ENCODE measurements at regions of chr3 and their contacts with region 1.

Region 1: GRCh38 chr3:57397175-57398026 is 104.9 kb upstream of the ASB14 start:
- DNase-seq: peak; percentile 56 to 72 (median 64)
- H3K4me3 ChIP-seq: no peak overlapping the region
- H3K4me3 Mint-ChIP-seq: peak overlapping the region in 7 of 8 donors; percentile 0 to 71 (median 31)
- H3K27ac ChIP-seq: no peak overlapping the region
- H3K27ac Mint-ChIP-seq: peak overlapping the region in 6 of 7 donors; percentile 33 to 72 (median 46)
- H3K4me1 ChIP-seq: peaks cover 7% of the 10 kb centered on the region
- H3K4me1 Mint-ChIP-seq: peaks cover 6 to 12% (median 9%) of the 10 kb centered on the region in 4 donors
- H3K27me3 ChIP-seq: no peaks in the 10 kb centered on the region
- H3K27me3 Mint-ChIP-seq: peaks cover 5 to 8% of the 10 kb centered on the region in 2 donors

Region 2: GRCh38 chr3:57335283-57335938 is 62.0 kb before region 1 on chr3:
- CTCF ChIA-PET with region 1: no interaction called
- POLR2A ChIA-PET with region 1: no interaction called
- intact Hi-C with region 1: no loop called
- DNase-seq: no peak
- H3K4me3 ChIP-seq: no peak overlapping the region
- H3K4me3 Mint-ChIP-seq: no peak overlapping the region
- H3K27ac ChIP-seq: no peak overlapping the region
- H3K27ac Mint-ChIP-seq: no peak overlapping the region
- H3K4me1 ChIP-seq: no peaks in the 10 kb centered on the region
- H3K4me1 Mint-ChIP-seq: no peaks in the 10 kb centered on the region
- H3K27me3 ChIP-seq: peaks cover 7% of the 10 kb centered on the region
- H3K27me3 Mint-ChIP-seq: peaks cover 8 to 16% of the 10 kb centered on the region in 2 donors

Region 3: DNA sequence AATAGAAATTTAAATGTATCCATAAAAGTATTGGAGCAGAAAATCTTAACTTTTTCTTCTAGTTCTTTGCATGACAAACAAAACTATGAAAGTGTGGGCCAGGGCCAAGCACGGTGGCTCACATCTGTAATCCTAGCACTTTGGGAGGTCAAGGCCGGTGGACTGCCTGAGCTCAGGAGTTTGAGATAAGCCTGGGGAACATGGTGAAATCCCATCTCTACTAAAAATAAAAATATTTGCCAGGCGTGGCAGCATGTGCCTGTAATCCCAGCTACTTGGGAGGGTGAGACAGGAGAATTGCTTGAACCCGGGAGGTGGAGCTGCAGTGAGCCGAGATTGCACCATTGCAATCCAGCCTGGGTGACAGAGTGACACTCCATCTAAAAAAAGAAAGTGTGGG is 11.9 kb before region 1 on chr3:
- CTCF ChIA-PET with region 1: interaction called, 11 read pairs
- POLR2A ChIA-PET with region 1: no interaction called
- intact Hi-C with region 1: no loop called
- DNase-seq: no peak
- H3K4me3 ChIP-seq: no peak overlapping the region
- H3K4me3 Mint-ChIP-seq: no peak overlapping the region
- H3K27ac ChIP-seq: no peak overlapping the region
- H3K27ac Mint-ChIP-seq: no peak overlapping the region
- H3K4me1 ChIP-seq: no peaks in the 10 kb centered on the region
- H3K4me1 Mint-ChIP-seq: no peaks in the 10 kb centered on the region
- H3K27me3 ChIP-seq: no peaks in the 10 kb centered on the region
- H3K27me3 Mint-ChIP-seq: peaks cover 0 to 3% of the 10 kb centered on the region in 2 donors

Region 4: DNA sequence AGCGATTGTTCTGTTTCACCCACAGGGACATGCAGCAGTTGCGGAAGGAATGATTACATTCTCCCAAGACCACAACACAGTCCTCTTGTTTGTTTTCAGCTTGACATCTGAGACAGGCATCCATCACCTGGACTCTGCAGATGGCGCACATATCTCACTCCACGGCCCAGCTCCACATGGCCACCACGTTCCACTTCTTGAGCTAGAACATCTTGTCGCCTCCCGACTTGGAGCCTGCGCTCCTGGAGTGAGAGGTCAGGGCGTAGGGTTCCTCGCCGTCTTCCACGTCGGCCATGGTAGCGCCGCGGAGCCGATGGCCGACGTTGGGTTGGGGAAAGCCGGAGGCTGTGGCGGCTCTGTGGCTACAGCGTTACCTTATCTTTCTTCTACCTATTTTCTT is 122.3 kb after region 1 on chr3:
- CTCF ChIA-PET with region 1: no interaction called
- POLR2A ChIA-PET with region 1: no interaction called
- intact Hi-C with region 1: no loop called
- DNase-seq: no peak
- H3K4me3 ChIP-seq: no peak overlapping the region
- H3K4me3 Mint-ChIP-seq: no peak overlapping the region
- H3K27ac ChIP-seq: no peak overlapping the region
- H3K27ac Mint-ChIP-seq: no peak overlapping the region
- H3K4me1 ChIP-seq: no peaks in the 10 kb centered on the region
- H3K4me1 Mint-ChIP-seq: peaks cover 0 to 3% (median 1%) of the 10 kb centered on the region in 4 donors
- H3K27me3 ChIP-seq: no peaks in the 10 kb centered on the region
- H3K27me3 Mint-ChIP-seq: peaks cover 2 to 6% of the 10 kb centered on the region in 2 donors

Region 5: DNA sequence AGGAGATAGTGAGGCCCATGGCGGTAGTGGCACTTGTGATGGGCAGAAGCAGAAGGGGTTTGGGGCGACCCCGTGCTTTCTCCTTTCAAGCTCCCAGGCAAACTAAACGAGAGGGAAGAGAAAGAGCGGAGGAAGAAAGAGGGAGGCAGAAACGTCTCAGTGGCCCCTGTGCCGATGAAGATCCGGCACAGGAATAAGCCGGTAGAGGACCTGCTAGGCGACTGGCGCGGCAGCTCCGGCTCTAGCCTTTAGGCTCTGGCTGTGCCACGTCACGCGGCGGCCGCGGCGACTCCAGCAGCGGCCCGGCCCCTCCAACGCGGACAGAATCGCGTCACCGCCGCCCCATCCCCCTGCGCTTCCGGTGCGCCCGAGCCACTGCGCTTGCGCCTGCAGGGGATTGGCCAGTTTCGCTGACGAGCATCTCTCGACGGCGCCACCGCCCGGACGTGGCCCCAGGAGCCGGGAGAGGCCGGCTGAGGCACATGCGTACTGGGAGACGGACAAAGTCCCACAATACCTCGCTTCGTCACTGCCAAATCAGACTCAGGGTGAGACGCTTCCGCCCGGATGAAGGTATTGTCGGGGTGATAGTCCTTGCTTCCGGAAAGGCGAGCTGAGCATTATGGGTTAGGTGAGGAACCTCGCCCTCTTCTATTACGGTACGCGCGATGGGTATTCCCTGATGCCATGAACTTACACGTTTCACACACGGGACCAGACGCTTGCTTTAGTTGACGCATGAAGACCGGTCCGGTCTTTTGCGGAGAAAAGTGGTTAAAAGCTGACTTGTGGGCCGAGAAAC is 199.9 kb after region 1 on chr3 and contains the start of gene ARF4:
- CTCF ChIA-PET with region 1: no interaction called
- POLR2A ChIA-PET with region 1: interaction called, 11 read pairs
- intact Hi-C with region 1: no loop called
- DNase-seq: peak; percentile 100
- H3K4me3 ChIP-seq: peak within 1 kb of the TSS; percentile 72 to 95
- H3K4me3 Mint-ChIP-seq: peak within 1 kb of the TSS; percentile 85 to 99 (median 99)
- H3K27ac ChIP-seq: peak within 1 kb of the TSS; percentile 100
- H3K27ac Mint-ChIP-seq: peak within 1 kb of the TSS; percentile 99 to 100 (median 100)
- H3K4me1 ChIP-seq: peaks cover 62% of the 10 kb centered on the region
- H3K4me1 Mint-ChIP-seq: peaks cover 34 to 72% (median 48%) of the 10 kb centered on the region in 4 donors
- H3K27me3 ChIP-seq: no peaks in the 10 kb centered on the region
- H3K27me3 Mint-ChIP-seq: no peaks in the 10 kb centered on the region
- total RNA-seq, gene ARF4: 55.8 to 58.5 TPM

Region 6: GRCh38 chr3:57826245-57826951 is 429.0 kb after region 1 on chr3:
- CTCF ChIA-PET with region 1: interaction called, 13 read pairs
- POLR2A ChIA-PET with region 1: no interaction called
- intact Hi-C with region 1: loop called (anchors 1 kb)
- DNase-seq: no peak
- H3K4me3 ChIP-seq: no peak overlapping the region
- H3K4me3 Mint-ChIP-seq: no peak overlapping the region
- H3K27ac ChIP-seq: no peak overlapping the region
- H3K27ac Mint-ChIP-seq: peak overlapping the region in 1 of 7 donors; percentile 71
- H3K4me1 ChIP-seq: no peaks in the 10 kb centered on the region
- H3K4me1 Mint-ChIP-seq: peaks cover 7 to 27% (median 10%) of the 10 kb centered on the region in 4 donors
- H3K27me3 ChIP-seq: no peaks in the 10 kb centered on the region
- H3K27me3 Mint-ChIP-seq: no peaks in the 10 kb centered on the region

Region 7: GRCh38 chr3:57910988-57911387 is 513.6 kb after region 1 on chr3:
- CTCF ChIA-PET with region 1: interaction called, 22 read pairs
- POLR2A ChIA-PET with region 1: no interaction called
- intact Hi-C with region 1: no loop called
- DNase-seq: peak in 3 of 5 donors; percentile 11 to 14 (median 13)
- H3K4me3 ChIP-seq: no peak overlapping the region
- H3K4me3 Mint-ChIP-seq: no peak overlapping the region
- H3K27ac ChIP-seq: no peak overlapping the region
- H3K27ac Mint-ChIP-seq: no peak overlapping the region
- H3K4me1 ChIP-seq: no peaks in the 10 kb centered on the region
- H3K4me1 Mint-ChIP-seq: no peaks in the 10 kb centered on the region
- H3K27me3 ChIP-seq: no peaks in the 10 kb centered on the region
- H3K27me3 Mint-ChIP-seq: no peaks in the 10 kb centered on the region